Common myeloid progenitor, CD34-positive (primary cell): ENCODE measurements at regions of chr20 and their contacts with region 1.

Region 1: DNA sequence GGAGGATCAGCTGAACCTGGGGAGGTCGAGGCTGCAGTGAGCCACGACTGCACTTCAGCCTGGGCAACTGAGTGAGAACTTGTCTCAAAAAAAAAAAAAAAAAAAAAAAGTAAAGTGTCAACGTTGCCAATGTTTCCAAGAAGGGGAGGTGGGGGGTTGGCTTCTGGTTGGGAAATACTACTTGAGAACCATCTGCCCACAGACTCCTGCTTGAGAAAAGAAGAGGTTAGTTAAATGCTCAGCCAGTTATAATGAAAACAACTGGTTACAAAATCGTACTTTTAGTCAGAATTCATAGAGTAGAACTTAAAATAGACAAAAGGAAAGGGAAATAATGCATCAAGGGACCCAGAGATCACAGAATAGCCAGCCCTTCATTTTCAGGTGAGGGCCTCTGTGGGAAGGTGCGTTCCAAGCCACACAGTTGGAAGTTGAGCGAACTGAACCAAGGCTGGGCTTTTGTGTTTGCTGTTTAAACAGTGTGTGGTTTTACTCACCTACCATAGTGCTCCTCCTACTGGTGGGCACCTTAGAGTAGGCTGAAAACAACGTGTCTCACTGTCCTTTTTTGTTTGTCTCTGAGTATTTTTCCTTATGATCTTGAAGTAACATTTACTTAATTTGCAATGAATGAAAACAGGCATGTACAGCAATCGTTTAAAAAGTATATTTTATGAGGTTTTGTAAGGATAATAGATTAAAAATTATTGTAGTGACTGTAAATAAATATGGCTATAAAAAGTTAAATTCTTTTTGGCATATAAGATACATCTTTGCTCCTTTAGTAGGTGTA is 200.7 kb downstream of the BCAS1 start:
- DNase-seq: peak; percentile 84 to 86 (median 85)
- H3K4me3 ChIP-seq: peak overlapping the region in 4 of 7 experiments; percentile 28 to 46 (median 42)
- H3K27ac ChIP-seq: peak overlapping the region in 1 of 2 experiments; percentile 57
- H3K4me1 ChIP-seq: peaks cover 27 to 65% (median 42%) of the 10 kb centered on the region in 4 experiments
- H3K27me3 ChIP-seq: no peaks in the 10 kb centered on the region

Region 2: GRCh38 chr20:53847129-53847836 is 22.4 kb before region 1 on chr20:
- CTCF ChIA-PET with region 1: interaction called, 14 read pairs
- POLR2A ChIA-PET with region 1: no interaction called
- DNase-seq: peak; percentile 66 to 85 (median 79)
- H3K4me3 ChIP-seq: peak overlapping the region in 2 of 7 experiments; percentile 14 to 26
- H3K27ac ChIP-seq: peak overlapping the region in 1 of 2 experiments; percentile 39
- H3K4me1 ChIP-seq: peaks cover 14 to 49% (median 23%) of the 10 kb centered on the region in 4 experiments
- H3K27me3 ChIP-seq: no peaks in the 10 kb centered on the region

Region 3: GRCh38 chr20:53891306-53891944 is 21.8 kb after region 1 on chr20:
- CTCF ChIA-PET with region 1: no interaction called
- POLR2A ChIA-PET with region 1: no interaction called
- DNase-seq: no peak
- H3K4me3 ChIP-seq: no peak overlapping the region
- H3K27ac ChIP-seq: no peak overlapping the region
- H3K4me1 ChIP-seq: peaks cover 3 to 15% (median 9%) of the 10 kb centered on the region in 4 experiments
- H3K27me3 ChIP-seq: no peaks in the 10 kb centered on the region

Region 4: DNA sequence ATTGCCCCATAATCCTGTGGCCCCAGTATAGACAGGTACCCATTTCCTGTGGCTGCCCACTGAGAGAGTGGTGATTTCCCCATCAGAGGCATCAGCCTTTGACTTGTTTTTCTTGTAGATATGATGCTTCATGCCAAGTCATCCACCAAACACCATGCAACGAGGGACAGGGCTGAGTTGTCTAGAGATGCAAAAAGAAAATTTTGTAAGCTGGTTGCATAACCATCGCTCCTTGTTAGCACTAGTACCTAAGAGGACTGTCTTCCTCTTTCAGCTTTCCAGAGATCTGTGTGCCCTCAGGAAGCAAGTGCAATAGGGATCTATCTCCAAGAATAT is 34.0 kb after region 1 on chr20:
- CTCF ChIA-PET with region 1: interaction called, 11 read pairs
- POLR2A ChIA-PET with region 1: no interaction called
- DNase-seq: peak in 2 of 3 donors; percentile 77 to 80
- H3K4me3 ChIP-seq: no peak overlapping the region
- H3K27ac ChIP-seq: no peak overlapping the region
- H3K4me1 ChIP-seq: peaks cover 11 to 67% (median 27%) of the 10 kb centered on the region in 4 experiments
- H3K27me3 ChIP-seq: no peaks in the 10 kb centered on the region